Cardiac septum (tissue), 1 donor: ENCODE measurements at regions of chr4 and their contacts with region 1.

Region 1: DNA sequence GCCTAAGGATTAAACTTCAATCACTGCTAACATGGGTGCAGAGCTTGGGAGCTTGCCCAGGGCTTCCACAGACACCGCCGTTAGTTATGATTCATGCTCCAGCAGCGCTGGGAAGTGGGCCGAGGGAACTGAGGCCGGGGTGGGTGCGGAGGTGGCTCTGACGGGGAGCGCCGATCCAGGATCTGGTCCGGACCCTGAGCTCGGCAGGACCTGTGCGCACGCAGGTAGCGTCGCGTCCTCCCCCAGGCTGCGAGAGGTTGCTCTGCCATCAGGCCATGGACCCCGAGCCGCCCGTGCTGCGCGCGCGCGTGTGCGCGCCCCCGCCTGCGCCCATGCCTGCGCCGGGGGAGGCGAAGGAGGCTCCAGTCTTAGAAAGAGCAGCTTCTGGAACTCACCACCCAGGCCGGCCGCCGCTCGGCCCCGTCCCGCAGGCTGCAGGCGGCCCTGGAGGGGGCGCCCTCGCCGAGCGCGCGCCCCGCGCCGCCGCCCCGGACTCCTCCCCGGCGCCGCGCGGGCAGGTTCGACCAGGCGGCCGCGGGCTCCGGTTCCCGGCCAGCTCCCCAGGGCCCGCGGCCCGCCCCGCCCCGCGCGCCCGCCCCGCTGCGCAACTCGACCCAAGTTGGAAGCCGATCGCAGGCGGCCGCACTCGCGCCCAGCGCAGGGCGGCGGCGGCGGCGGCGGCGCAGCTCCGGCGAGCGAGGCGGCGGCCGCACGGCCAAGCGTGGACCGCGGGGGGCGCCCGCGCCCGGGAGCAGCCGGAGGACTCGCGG is 729 bp upstream of the ADRA2C start:
- DNase-seq: no peak

Region 2: GRCh38 chr4:3106339-3107186 is 658.9 kb before region 1 on chr4:
- intact Hi-C with region 1: loop called (anchors 5 kb)
- DNase-seq: peak; percentile 94

Region 3: DNA sequence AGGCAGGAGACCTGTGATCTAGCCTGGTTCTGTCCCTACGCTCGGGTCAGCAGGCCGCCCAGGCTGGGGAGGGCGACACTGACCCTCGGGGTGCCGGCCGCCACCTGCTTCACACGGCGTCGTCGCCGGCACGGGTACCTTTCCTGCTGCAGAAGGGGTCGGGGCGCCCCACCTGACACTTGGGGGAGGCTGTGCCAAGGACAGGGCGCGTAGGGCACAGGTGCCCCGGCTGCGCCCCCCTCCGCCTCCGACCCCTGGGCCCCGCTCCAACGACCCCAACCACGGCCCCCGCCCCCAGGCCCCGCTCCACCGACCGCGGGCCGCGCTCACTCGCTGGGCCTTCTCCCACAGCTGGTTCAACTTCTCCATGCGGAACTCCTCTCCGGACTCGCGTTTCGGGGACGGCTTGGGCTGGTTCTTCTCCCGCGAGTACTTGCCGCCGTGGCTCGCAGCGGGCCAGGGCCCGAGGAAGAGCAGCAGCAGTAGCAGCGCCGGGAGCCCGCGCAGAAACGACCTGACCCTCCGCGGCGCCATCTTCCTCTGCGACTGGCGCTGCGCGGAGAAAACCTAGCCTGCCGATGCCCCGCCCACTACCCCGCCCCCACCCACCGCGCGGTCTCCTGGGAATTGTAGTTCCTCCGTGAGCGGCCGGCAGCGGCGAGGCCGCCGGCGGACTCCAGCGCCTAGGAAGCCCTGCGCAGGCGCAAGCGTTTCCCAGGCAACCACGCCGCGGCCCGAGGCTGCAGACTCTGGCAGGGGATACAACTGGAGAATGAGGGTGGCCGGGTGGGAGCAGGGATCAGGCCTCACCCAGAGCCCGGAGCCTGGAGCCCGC is 233.4 kb before region 1 on chr4 and contains the start of gene LRPAP1:
- intact Hi-C with region 1: no loop called
- DNase-seq: peak; percentile 97
- total RNA-seq, gene LRPAP1: 275 TPM

Region 4: DNA sequence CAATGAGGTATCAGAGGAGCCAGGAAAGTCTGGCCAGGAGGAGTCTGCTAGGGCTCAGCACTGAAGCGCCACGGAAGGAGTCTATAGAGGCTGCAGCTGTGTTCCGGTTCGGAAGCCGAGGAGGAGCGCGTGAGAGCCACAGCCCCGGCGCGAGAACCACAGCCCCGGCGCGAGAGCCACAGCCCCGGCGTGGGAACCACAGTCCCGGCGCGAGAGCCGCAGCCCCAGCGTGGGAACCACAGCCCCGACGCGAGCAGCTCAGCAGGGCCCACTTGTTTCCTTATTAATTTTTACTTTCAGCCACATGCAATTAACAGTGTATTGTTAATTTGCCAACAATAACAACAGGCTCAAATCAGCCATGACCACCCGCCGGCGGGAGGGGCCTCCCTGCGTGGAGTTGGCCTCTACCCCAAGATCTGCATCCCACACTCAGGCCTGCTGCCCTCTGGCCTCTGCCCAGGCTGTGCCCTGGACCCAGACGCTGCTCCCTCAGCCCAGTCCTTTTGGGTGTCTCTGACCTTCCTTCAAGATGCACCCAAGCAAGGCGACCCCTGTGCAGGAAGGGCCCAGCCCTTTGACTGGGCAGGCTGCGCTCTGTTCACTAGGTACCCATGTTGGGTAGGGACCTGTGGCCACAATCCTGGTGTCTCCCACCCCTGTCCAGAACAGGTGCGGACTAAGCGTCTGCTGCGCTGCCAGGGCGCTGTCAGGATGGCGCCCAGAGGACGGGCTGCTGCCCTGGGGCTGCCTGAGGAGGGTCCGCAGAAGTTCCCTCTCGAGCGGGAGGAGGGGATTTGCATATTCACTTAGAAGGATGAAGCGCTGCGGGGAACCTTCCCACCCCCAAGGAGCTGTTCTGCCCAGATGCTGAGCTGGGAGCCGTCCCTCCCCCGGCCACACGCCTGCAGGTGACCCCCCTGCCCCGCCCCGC is 114.5 kb after region 1 on chr4:
- intact Hi-C with region 1: loop called (anchors 5 kb)
- DNase-seq: no peak

Region 5: GRCh38 chr4:4241441-4241840 is 476.0 kb after region 1 on chr4:
- intact Hi-C with region 1: no loop called
- DNase-seq: no peak